ENCODE measurements at regions of chr10 and their contacts with region 1.

Region 1: GRCh38 chr10:15898046-15898445 is 37.7 kb upstream of the MINDY3 start:
- DNase-seq: peak; percentile 50
- H3K4me3 ChIP-seq: no peak overlapping the region
- H3K27ac ChIP-seq: no peak overlapping the region
- H3K4me1 ChIP-seq: no peaks in the 10 kb centered on the region
- H3K27me3 ChIP-seq: peaks cover 68% of the 10 kb centered on the region
- CTCF ChIP-seq: peak; percentile 47; the same call in 1 of the 2 replicates

Region 2: GRCh38 chr10:15802375-15802949 is 95.6 kb before region 1 on chr10:
- CTCF ChIA-PET with region 1: no interaction called
- POLR2A ChIA-PET with region 1: no interaction called
- intact Hi-C with region 1: no loop called
- DNase-seq: peak; percentile 10
- H3K4me3 ChIP-seq: no peak overlapping the region
- H3K27ac ChIP-seq: no peak overlapping the region
- H3K4me1 ChIP-seq: no peaks in the 10 kb centered on the region
- H3K27me3 ChIP-seq: no peaks in the 10 kb centered on the region
- CTCF ChIP-seq: no peak

Region 3: GRCh38 chr10:15879663-15880062 is 18.4 kb before region 1 on chr10:
- CTCF ChIA-PET with region 1: no interaction called
- POLR2A ChIA-PET with region 1: no interaction called
- intact Hi-C with region 1: no loop called
- DNase-seq: peak; percentile 94
- H3K4me3 ChIP-seq: no peak overlapping the region
- H3K27ac ChIP-seq: no peak overlapping the region
- H3K4me1 ChIP-seq: peaks cover 12% of the 10 kb centered on the region
- H3K27me3 ChIP-seq: peaks cover 73% of the 10 kb centered on the region
- CTCF ChIP-seq: no peak

Region 4: GRCh38 chr10:16116404-16117304 is 218.6 kb after region 1 on chr10:
- CTCF ChIA-PET with region 1: no interaction called
- POLR2A ChIA-PET with region 1: no interaction called
- intact Hi-C with region 1: loop called (anchors 10 kb)
- DNase-seq: peak; percentile 60
- H3K4me3 ChIP-seq: no peak overlapping the region
- H3K27ac ChIP-seq: no peak overlapping the region
- H3K4me1 ChIP-seq: no peaks in the 10 kb centered on the region
- H3K27me3 ChIP-seq: peaks cover 34% of the 10 kb centered on the region
- CTCF ChIP-seq: peak; percentile 66

Region 5: DNA sequence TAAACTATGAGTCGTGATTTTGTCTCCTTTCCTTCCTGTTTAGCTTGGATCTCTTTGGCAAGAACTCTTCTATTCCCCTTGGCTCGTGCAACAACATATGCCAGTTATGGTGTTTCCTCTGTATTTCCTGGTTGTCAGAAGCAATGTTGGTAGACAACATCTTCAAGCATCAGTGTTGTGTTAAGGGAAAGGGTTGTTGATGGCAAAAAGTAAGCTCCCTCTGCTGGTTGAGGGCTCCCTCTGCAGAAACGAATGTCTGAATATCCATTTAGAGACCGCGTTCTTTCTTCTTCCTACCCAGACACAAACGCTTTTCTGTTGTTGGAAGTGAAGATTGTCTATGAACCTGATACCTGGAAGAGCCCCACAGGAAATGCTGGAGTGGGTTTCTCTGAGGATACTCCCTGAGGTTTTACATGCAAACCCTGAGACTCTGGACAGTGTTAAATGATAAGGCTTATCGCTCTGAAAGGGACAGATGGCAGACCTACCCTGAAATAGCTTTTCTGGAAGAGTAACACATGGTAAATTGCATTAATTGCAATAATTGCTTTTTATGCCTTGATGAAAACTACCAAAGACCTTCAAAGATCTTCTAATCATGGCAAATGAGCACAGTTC is 647.2 kb after region 1 on chr10:
- CTCF ChIA-PET with region 1: interaction called, 3 read pairs
- POLR2A ChIA-PET with region 1: no interaction called
- intact Hi-C with region 1: loop called (anchors 5 kb)
- DNase-seq: peak; percentile 54
- H3K4me3 ChIP-seq: no peak overlapping the region
- H3K27ac ChIP-seq: no peak overlapping the region
- H3K4me1 ChIP-seq: no peaks in the 10 kb centered on the region
- H3K27me3 ChIP-seq: peaks cover 49% of the 10 kb centered on the region
- CTCF ChIP-seq: peak; percentile 78

Region 6: GRCh38 chr10:16777473-16778370 is 879.7 kb after region 1 on chr10:
- CTCF ChIA-PET with region 1: interaction called, 6 read pairs
- POLR2A ChIA-PET with region 1: no interaction called
- intact Hi-C with region 1: loop called (anchors 10 kb)
- DNase-seq: peak; percentile 65
- H3K4me3 ChIP-seq: no peak overlapping the region
- H3K27ac ChIP-seq: no peak overlapping the region
- H3K4me1 ChIP-seq: peaks cover 14% of the 10 kb centered on the region
- H3K27me3 ChIP-seq: no peaks in the 10 kb centered on the region
- CTCF ChIP-seq: peak; percentile 81